A549 (cell line): ENCODE measurements at regions of chr2 and their contacts with region 1.

Region 1: DNA sequence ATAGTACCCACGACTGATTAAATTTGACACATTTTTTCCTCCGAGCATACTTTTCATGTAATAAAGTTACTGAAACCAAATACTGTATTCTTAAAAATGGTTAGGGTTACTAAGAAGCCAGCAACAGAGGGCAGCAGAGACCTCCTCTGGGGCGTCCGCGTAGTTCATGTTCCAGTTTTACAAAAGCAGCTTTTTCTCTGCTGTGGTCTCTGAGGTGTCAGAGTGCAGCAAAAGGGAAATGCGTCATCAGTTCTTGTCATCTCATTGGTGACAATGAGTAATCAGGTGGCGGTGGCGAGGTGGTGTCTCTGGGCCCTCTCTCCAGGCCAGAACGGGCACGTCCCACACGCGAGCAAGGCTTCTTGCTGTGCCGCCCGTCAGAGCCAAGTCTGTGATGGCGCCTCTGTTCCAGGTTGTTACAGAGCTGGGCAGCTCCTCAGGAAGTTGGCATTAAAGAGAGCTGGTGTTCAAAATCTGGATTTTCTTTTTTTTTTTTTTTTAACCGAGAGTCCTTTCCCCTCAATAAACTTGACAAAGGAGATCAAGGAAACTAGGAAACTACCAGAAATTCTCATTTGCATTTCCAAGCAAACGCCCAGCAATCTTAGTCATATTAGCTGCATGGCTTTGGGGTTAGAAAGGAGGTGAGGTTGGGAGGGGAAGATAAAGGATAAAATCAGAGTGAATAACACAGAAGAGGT is 98.6 kb upstream of the BZW1 start:
- DNase-seq: peak; percentile 78 to 96
- ATAC-seq: peak; percentile 97 to 98
- H3K4me3 ChIP-seq: peak overlapping the region; percentile 33
- H3K27ac ChIP-seq: peak overlapping the region; percentile 85 to 91
- H3K4me1 ChIP-seq: peaks cover 22% of the 10 kb centered on the region
- CTCF ChIP-seq: peak; percentile 96
- EP300 ChIP-seq: peak; percentile 34 to 40; a peak in 2 of 5 replicates
- POLR2A ChIP-seq: peak; percentile 53
- RAD21 ChIP-seq: peak; percentile 99

Region 2: DNA sequence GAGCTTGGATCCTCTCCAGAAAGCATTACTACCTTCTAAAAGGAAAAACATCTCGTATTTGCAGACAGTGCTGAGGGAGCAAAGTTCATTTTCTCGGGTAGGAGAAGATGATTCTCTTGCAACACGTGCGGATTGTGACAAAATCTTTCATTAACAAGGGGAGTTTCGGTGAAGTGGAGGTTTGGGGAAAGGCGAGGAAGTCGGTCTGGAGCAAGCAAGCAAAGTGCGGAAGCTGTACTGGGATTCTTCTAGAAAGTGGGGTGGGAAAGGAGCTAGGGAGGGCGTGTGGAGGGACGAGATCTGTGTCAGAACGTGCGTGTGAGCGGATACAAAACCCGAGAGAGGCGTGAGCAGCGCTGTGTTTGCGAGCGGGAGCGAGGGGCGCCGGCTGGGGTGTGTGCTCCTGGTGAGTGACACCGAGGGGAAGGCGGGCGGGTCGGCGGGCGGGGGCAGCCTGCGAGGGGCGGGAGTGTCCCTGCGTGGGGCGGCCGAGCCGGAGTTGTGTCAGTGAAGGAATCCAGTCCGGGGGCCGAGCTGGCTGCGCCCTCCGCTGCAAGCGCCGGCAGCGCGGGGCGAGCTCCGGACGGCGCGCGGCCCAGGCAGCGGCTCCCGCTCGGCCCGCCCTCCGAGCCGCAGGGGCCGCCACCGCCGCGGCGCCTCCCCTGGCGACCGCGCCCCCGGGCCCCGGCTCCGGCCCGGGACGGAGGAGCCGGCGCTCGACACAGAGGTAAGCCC is 406.8 kb before region 1 on chr2 and contains the start of gene SPATS2L:
- CTCF ChIA-PET with region 1: no interaction called
- POLR2A ChIA-PET with region 1: no interaction called
- DNase-seq: peak; percentile 55 to 87
- ATAC-seq: peak; percentile 77 to 86
- H3K4me3 ChIP-seq: peak within 1 kb of the TSS; percentile 77
- H3K27ac ChIP-seq: peak within 1 kb of the TSS; percentile 88 to 98
- H3K4me1 ChIP-seq: peaks cover 61% of the 10 kb centered on the region
- CTCF ChIP-seq: no peak
- EP300 ChIP-seq: no peak
- POLR2A ChIP-seq: peak; percentile 83
- RAD21 ChIP-seq: no peak; a peak in 1 of 5 replicates
- polyA plus RNA-seq, gene SPATS2L: 155 and 202 TPM in 2 replicates

Region 3: DNA sequence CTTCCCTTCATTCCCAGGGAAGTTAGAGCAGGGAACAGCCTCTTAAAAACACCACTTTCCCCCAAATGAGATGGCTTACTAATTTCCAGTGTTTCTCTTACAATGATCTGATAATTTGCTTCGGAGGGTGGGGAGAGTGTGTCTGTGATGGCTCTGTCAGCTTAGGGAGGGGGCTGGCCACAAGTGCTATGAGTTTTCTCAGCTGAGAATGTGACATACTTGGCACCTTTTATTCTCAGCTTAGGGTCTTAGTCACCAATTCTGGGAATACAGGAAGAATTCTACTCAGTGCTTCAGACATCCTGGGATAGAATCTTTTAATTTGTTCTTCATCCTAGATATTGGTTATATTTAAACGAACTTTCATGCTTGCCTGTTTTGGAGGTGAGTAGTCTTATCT is 63.0 kb before region 1 on chr2:
- CTCF ChIA-PET with region 1: no interaction called
- POLR2A ChIA-PET with region 1: no interaction called
- DNase-seq: no peak
- ATAC-seq: no peak
- H3K4me3 ChIP-seq: no peak overlapping the region
- H3K27ac ChIP-seq: no peak overlapping the region
- H3K4me1 ChIP-seq: peaks cover 11% of the 10 kb centered on the region
- CTCF ChIP-seq: no peak
- EP300 ChIP-seq: no peak
- POLR2A ChIP-seq: no peak
- RAD21 ChIP-seq: no peak

Region 4: GRCh38 chr2:200728630-200729029 is 15.5 kb after region 1 on chr2:
- CTCF ChIA-PET with region 1: interaction called, 116 read pairs
- POLR2A ChIA-PET with region 1: interaction called, 5 read pairs
- DNase-seq: peak in 1 of 2 experiments; percentile 19
- ATAC-seq: no peak; a peak in 1 of 6 replicates
- H3K4me3 ChIP-seq: no peak overlapping the region
- H3K27ac ChIP-seq: peak overlapping the region; percentile 23 to 57; a peak in 4 of 6 replicates
- H3K4me1 ChIP-seq: peaks cover 10% of the 10 kb centered on the region; the same call in 2 of the 3 replicates
- CTCF ChIP-seq: no peak
- EP300 ChIP-seq: no peak
- POLR2A ChIP-seq: no peak
- RAD21 ChIP-seq: no peak

Region 5: GRCh38 chr2:200741468-200742202 is 28.5 kb after region 1 on chr2:
- CTCF ChIA-PET with region 1: interaction called, 116 read pairs
- POLR2A ChIA-PET with region 1: no interaction called
- DNase-seq: peak in 1 of 2 experiments; percentile 21
- ATAC-seq: peak; percentile 26 to 62; a peak in 3 of 6 replicates
- H3K4me3 ChIP-seq: no peak overlapping the region
- H3K27ac ChIP-seq: peak overlapping the region; percentile 48 to 79
- H3K4me1 ChIP-seq: peaks cover 18% of the 10 kb centered on the region
- CTCF ChIP-seq: no peak
- EP300 ChIP-seq: no peak
- POLR2A ChIP-seq: no peak
- RAD21 ChIP-seq: no peak

Region 6: GRCh38 chr2:200765139-200765951 is 52.2 kb after region 1 on chr2:
- CTCF ChIA-PET with region 1: interaction called, 12 read pairs
- POLR2A ChIA-PET with region 1: interaction called, 7 read pairs
- DNase-seq: peak; percentile 55 to 90
- ATAC-seq: peak; percentile 86 to 89
- H3K4me3 ChIP-seq: no peak overlapping the region
- H3K27ac ChIP-seq: peak overlapping the region; percentile 85 to 88
- H3K4me1 ChIP-seq: peaks cover 60% of the 10 kb centered on the region
- CTCF ChIP-seq: no peak
- EP300 ChIP-seq: peak; percentile 53 to 77; a peak in 3 of 5 replicates
- POLR2A ChIP-seq: no peak
- RAD21 ChIP-seq: peak; percentile 11 to 50; a peak in 3 of 5 replicates

Region 7: GRCh38 chr2:200811336-200812121 is 98.4 kb after region 1 on chr2 and contains the start of gene BZW1:
- CTCF ChIA-PET with region 1: interaction called, 10 read pairs
- POLR2A ChIA-PET with region 1: interaction called, 6 read pairs
- DNase-seq: peak; percentile 85 to 97
- ATAC-seq: peak; percentile 82 to 90
- H3K4me3 ChIP-seq: peak within 1 kb of the TSS; percentile 97
- H3K27ac ChIP-seq: peak within 1 kb of the TSS; percentile 96 to 99
- H3K4me1 ChIP-seq: peaks cover 45% of the 10 kb centered on the region
- CTCF ChIP-seq: no peak
- EP300 ChIP-seq: no peak
- POLR2A ChIP-seq: peak; percentile 46
- RAD21 ChIP-seq: 0 out of 5 replicates have a peak, but pooled peaks of 1 of the 2 experiments have one; percentile 2
- polyA plus RNA-seq, gene BZW1: 439 and 494 TPM in 2 replicates

Region 8: DNA sequence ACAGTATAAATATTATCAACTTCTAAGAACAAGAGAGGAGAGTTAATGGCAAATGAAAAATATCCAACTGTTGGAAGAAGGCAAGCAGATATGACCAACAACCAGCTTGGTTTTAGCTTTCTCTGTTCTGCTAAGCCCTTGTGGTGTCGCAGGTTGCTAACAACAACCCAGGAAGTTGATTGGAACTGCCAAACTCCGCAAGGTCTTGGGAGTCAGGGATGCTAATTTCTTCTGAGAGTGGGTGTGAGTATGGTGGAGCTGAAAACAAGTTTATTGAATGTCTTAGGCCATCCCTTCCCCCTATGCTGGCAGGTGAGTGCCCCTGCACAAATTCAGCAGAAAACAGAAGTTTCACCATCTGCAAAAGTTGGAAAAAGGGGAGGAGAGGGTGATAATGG is 116.1 kb after region 1 on chr2:
- CTCF ChIA-PET with region 1: interaction called, 13 read pairs
- POLR2A ChIA-PET with region 1: interaction called, 5 read pairs
- DNase-seq: no peak
- ATAC-seq: peak; percentile 23 to 40; a peak in 4 of 6 replicates
- H3K4me3 ChIP-seq: no peak overlapping the region
- H3K27ac ChIP-seq: no peak overlapping the region
- H3K4me1 ChIP-seq: peaks cover 3% of the 10 kb centered on the region; the same call in 1 of the 3 replicates
- CTCF ChIP-seq: no peak
- EP300 ChIP-seq: no peak
- POLR2A ChIP-seq: no peak
- RAD21 ChIP-seq: no peak

Region 9: GRCh38 chr2:200888704-200889625 is 175.8 kb after region 1 on chr2 and contains the starts of genes NIF3L1 and PPIL3:
- CTCF ChIA-PET with region 1: interaction called, 3 read pairs
- POLR2A ChIA-PET with region 1: interaction called, 13 read pairs
- DNase-seq: peak; percentile 86 to 99
- ATAC-seq: peak; percentile 94 to 95
- H3K4me3 ChIP-seq: peak within 1 kb of the TSS; percentile 75
- H3K27ac ChIP-seq: peak within 1 kb of the TSS; percentile 89 to 93
- H3K4me1 ChIP-seq: peaks cover 12% of the 10 kb centered on the region; the same call in 2 of the 3 replicates
- CTCF ChIP-seq: no peak
- EP300 ChIP-seq: no peak
- POLR2A ChIP-seq: peak; percentile 26
- RAD21 ChIP-seq: no peak; a peak in 1 of 5 replicates
- polyA plus RNA-seq, gene NIF3L1: 103 and 127 TPM in 2 replicates
- polyA plus RNA-seq, gene PPIL3: 62.6 and 75.6 TPM in 2 replicates

Region 10: DNA sequence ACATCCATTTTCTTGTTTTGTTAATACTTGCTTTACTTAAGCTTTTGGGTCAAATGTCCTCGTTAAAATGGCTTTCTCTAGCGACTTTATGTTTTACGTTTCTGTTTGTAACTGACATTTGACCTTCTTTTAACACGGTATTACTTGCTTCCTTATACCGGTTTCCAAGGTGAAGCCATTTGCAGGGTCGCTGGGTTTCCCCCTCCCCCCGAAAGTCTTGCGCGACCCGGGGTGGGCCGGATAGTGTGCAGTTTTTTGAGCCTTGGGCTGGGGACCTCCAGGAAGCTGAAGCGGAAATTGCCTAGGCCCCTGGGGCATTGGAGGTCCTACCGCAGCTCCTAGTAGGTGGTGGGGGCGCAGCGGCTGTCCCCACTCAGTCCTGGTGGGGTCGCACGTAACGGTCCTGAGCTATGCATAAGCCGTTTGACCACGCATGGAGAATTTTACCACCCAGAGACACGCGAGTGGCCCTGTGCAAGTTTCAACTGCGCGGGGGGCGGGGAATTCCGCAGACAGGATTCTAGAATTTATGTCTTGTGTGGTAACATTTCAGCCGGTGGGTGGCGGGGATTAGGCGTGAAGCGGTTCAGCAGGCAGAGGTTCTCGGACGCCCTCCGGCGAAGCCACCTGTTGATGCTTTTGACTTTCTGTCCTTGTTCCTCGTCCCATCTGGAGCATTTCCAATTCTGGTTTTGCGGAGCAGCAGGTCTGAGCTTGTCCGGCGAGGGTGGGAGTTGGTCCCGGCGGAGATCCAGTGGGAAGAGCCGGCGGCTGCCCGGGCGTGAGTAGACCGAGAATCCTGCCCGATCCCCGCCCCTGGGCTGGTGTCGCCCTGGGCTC is 405.2 kb after region 1 on chr2:
- CTCF ChIA-PET with region 1: no interaction called
- POLR2A ChIA-PET with region 1: no interaction called
- DNase-seq: peak; percentile 66 to 91
- ATAC-seq: peak; percentile 67 to 69
- H3K4me3 ChIP-seq: peak overlapping the region; percentile 69
- H3K27ac ChIP-seq: peak overlapping the region; percentile 90 to 99
- H3K4me1 ChIP-seq: peaks cover 56% of the 10 kb centered on the region
- CTCF ChIP-seq: peak; percentile 62
- EP300 ChIP-seq: peak in 1 of 2 experiments; percentile 19; a peak in 1 of 5 replicates
- POLR2A ChIP-seq: peak; percentile 33; the same call in 1 of the 2 replicates
- RAD21 ChIP-seq: peak; percentile 61 to 77